Activated CD8-positive, alpha-beta memory T cell treated with anti-CD3 and anti-CD28 coated beads, Interleukin-2, amount 10 ng/mL, durations not matched to agents 7 days and 5 days (primary cell): ENCODE measurements at regions of chr19 and their contacts with region 1.

Region 1: DNA sequence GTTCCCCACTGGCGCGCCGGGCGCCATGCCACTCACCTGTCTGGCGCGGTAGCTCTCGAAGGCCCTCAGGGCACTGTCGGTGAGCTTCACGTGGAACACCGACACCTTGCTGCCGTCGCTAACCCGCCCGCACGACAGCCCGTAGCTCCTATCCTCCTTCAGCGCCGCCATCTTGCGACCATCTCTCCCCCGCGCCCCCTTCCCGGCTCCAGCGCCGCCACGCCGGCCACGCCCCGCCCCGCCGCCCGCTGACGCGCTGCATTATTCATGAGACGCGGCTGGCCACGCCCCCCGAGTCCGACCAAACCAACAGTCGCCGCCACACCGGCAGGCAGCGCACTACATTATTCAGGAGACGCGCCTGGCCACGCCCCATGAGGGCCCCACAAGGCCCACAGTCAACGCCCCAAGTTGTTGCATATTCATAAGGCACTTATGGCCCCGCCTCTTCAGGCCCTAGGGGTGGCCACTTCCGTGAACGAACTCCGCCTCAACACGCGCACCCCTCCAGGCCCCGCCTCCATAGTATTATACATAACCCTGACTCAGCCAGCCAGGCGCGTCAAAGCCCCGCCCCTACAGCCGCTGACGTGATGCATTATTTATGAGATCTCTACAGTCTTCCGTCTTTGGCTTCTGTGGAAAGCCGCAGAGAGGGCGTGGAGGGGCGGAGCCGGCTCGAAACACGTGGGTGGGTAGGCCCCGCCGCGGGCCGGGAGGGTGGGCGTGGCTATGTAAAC is at the start of gene ELL:
- DNase-seq: peak; percentile 100
- ATAC-seq: peak; percentile 91
- H3K4me3 Mint-ChIP-seq: peak within 1 kb of the TSS; percentile 92
- H3K27ac Mint-ChIP-seq: peak within 1 kb of the TSS; percentile 93
- H3K4me1 Mint-ChIP-seq: peaks cover 22% of the 10 kb centered on the region
- H3K27me3 Mint-ChIP-seq: no peaks in the 10 kb centered on the region
- total RNA-seq, gene ELL: 22.9 to 33.7 TPM

Region 2: DNA sequence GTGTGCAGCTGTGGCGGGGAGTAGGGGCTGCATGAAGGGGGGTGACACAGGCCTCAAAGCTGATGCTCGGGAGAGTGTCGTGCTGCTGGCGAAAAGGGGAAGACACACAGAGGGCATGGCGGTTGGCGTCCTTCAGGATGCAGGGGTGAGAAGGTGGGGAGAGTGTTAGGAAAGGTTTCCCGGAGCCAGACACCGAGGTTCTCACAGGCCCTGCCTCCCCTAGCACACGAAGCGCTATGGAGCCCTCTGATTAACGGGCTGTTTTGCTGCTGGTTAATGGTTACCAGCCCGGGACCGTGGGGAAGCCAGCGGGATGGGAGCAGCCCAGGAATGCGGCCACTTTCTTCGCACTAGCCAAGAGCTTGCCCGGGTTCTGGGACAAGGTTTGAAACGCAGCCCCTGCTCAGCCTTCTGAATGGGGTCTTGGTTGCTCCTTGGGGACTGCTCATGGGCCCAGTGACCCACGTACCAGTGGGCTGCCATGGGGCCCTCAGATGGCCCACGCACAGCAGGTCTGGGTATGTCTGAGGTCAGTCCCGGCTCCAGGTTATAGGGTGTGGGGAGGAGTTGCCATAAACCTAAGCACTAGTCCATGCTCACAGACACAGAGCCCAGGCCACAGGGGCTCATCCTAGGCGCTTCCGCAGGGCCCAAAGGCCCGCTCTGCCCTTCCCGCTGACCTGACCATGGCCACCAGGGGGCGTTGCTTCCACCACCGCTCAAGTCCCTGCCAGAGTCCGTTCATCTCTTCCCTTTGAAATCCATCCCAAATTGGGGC is 52.8 kb before region 1 on chr19:
- CTCF ChIA-PET with region 1: interaction called, 12 read pairs
- DNase-seq: peak; percentile 63
- ATAC-seq: peak; percentile 57
- H3K4me3 Mint-ChIP-seq: no peak overlapping the region
- H3K27ac Mint-ChIP-seq: no peak overlapping the region
- H3K4me1 Mint-ChIP-seq: peaks cover 25% of the 10 kb centered on the region
- H3K27me3 Mint-ChIP-seq: no peaks in the 10 kb centered on the region

Region 3: DNA sequence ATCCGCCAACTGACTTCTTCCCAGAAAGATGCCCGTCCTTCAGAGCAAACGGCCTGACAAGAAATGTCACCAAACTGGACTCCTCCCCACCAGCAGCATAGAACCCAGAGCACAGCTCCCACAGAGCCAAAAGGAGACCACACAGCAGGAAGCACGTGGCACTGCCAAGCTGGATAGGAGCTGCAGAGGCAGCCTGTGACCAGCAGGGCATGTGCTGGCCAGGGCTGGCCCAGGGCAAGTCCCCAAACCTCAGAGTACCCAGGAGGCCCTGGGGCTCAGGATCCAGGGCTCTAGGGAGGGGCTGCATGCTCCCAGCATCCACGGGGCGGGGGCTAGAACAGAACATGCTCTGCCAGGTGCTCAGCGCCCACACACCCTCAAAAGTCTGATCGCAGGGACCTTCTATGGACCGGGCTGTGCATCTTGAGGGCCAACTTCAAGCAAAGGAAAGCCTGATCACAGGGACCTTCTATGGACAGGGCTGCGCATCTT is 33.8 kb before region 1 on chr19:
- CTCF ChIA-PET with region 1: interaction called, 60 read pairs
- DNase-seq: no peak
- ATAC-seq: no peak
- H3K4me3 Mint-ChIP-seq: no peak overlapping the region
- H3K27ac Mint-ChIP-seq: no peak overlapping the region
- H3K4me1 Mint-ChIP-seq: peaks cover 56% of the 10 kb centered on the region
- H3K27me3 Mint-ChIP-seq: no peaks in the 10 kb centered on the region

Region 4: DNA sequence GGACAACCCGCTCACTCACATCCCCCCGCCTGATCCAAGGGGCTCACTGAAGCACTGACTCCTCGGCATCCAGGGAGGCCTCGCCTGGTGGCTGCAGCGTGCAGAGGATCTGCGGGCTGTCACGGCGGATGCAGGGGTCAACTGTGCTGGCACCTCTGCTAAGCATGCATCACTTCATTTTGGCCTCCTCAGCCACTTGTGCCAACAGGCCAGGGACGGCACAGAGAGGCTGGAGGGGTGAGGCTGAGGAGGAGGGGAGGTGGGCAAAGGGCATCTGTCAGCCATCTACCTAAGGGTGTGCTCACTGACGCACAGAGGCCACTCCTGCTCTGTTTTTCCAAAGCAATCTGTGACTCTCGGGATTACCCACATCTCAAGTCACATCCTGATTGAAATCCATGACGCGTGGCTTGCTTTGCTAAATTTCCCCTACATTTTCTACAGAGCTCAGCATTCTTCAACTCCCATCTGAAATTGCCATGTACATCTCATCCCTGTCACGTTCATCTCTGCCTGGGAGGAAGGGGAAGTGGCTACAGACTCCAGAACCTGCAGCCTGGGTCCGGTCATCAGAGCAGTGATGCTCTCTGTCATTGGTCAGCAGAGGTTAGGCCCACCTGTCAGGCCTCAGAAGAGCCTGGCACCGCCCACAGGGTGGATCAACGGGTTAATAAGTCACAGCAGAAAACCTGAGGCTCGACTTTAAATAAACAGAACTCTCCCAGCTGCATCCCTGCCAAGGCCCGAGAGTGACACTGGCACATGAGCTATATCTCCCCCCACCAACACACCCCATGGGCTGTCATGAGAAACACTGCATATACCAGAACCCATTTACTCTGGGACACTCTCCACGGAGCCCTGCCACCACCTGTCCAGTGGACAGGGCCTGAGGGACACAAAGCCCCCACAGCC is 17.8 kb before region 1 on chr19:
- CTCF ChIA-PET with region 1: interaction called, 145 read pairs
- DNase-seq: no peak
- ATAC-seq: no peak
- H3K4me3 Mint-ChIP-seq: no peak overlapping the region
- H3K27ac Mint-ChIP-seq: peak overlapping the region; percentile 5
- H3K4me1 Mint-ChIP-seq: peaks cover 91% of the 10 kb centered on the region
- H3K27me3 Mint-ChIP-seq: no peaks in the 10 kb centered on the region

Region 5: GRCh38 chr19:18557474-18558201 is 35.6 kb after region 1 on chr19 and contains the start of gene KXD1:
- CTCF ChIA-PET with region 1: interaction called, 56 read pairs
- DNase-seq: peak; percentile 100
- ATAC-seq: peak; percentile 99
- H3K4me3 Mint-ChIP-seq: peak within 1 kb of the TSS; percentile 89
- H3K27ac Mint-ChIP-seq: peak within 1 kb of the TSS; percentile 94
- H3K4me1 Mint-ChIP-seq: peaks cover 24% of the 10 kb centered on the region
- H3K27me3 Mint-ChIP-seq: no peaks in the 10 kb centered on the region
- total RNA-seq, gene KXD1: 106 to 113 TPM